T-cell (primary cell): ENCODE measurements at regions of chr10 and their contacts with region 1.

Region 1: DNA sequence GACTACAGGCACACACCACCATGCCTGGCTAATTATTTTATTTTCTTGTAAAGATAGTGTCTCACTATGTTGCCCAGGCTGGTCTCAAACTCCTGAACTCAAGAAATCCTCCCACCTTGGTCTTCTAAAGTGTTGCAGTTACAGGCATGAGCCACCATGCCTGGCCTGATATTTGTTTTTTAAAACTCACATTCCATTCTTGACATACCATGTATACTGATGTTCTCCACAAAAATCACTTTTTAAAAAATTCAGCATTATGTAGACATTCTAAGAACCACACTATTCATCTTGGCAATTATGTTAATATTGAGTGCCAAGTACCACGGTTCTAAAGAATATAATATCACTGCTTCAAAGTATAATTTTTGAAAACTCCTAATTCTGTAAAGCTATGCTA is 43.5 kb downstream of the IDE start:
- DNase-seq: no peak
- ATAC-seq: no peak
- H3K4me3 ChIP-seq: no peak overlapping the region
- H3K4me3 Mint-ChIP-seq: no peak overlapping the region
- H3K27ac ChIP-seq: no peak overlapping the region
- H3K27ac Mint-ChIP-seq: no peak overlapping the region
- H3K4me1 ChIP-seq: no peaks in the 10 kb centered on the region
- H3K4me1 Mint-ChIP-seq: no peaks in the 10 kb centered on the region
- H3K27me3 ChIP-seq: no peaks in the 10 kb centered on the region
- H3K27me3 Mint-ChIP-seq: no peaks in the 10 kb centered on the region

Region 2: GRCh38 chr10:91944880-91945630 is 585.4 kb before region 1 on chr10:
- CTCF ChIA-PET with region 1: no interaction called
- POLR2A ChIA-PET with region 1: interaction called in 1 of 2 experiments, 11 read pairs
- DNase-seq: no peak
- ATAC-seq: peak in 1 of 4 experiments; percentile 58
- H3K4me3 ChIP-seq: no peak overlapping the region
- H3K4me3 Mint-ChIP-seq: no peak overlapping the region
- H3K27ac ChIP-seq: no peak overlapping the region
- H3K27ac Mint-ChIP-seq: peak overlapping the region; percentile 20 to 60
- H3K4me1 ChIP-seq: no peaks in the 10 kb centered on the region
- H3K4me1 Mint-ChIP-seq: peaks cover 8 to 20% (median 14%) of the 10 kb centered on the region in 3 donors
- H3K27me3 ChIP-seq: no peaks in the 10 kb centered on the region
- H3K27me3 Mint-ChIP-seq: no peaks in the 10 kb centered on the region

Region 3: GRCh38 chr10:92868557-92868956 is 338.1 kb after region 1 on chr10:
- CTCF ChIA-PET with region 1: interaction called in 1 of 2 experiments, 13 read pairs
- POLR2A ChIA-PET with region 1: no interaction called
- DNase-seq: no peak
- ATAC-seq: no peak
- H3K4me3 ChIP-seq: no peak overlapping the region
- H3K4me3 Mint-ChIP-seq: no peak overlapping the region
- H3K27ac ChIP-seq: no peak overlapping the region
- H3K27ac Mint-ChIP-seq: no peak overlapping the region
- H3K4me1 ChIP-seq: peaks cover 0 to 5% of the 10 kb centered on the region in 2 experiments
- H3K4me1 Mint-ChIP-seq: peaks cover 20 to 38% (median 26%) of the 10 kb centered on the region in 3 donors
- H3K27me3 ChIP-seq: no peaks in the 10 kb centered on the region
- H3K27me3 Mint-ChIP-seq: no peaks in the 10 kb centered on the region